WTC11 (cell line): ENCODE measurements at regions of chr2 and their contacts with region 1.

Region 1: GRCh38 chr2:16525265-16525887 is 140.3 kb downstream of the CYRIA start:
- DNase-seq: peak; percentile 81
- ATAC-seq: peak; percentile 82
- H3K4me3 Mint-ChIP-seq: no peak overlapping the region
- H3K27ac Mint-ChIP-seq: no peak overlapping the region
- H3K4me1 Mint-ChIP-seq: peaks cover 15% of the 10 kb centered on the region
- H3K27me3 Mint-ChIP-seq: peaks cover 3% of the 10 kb centered on the region; the same call in 1 of the 2 replicates
- CTCF ChIP-seq: peak; percentile 78

Region 2: DNA sequence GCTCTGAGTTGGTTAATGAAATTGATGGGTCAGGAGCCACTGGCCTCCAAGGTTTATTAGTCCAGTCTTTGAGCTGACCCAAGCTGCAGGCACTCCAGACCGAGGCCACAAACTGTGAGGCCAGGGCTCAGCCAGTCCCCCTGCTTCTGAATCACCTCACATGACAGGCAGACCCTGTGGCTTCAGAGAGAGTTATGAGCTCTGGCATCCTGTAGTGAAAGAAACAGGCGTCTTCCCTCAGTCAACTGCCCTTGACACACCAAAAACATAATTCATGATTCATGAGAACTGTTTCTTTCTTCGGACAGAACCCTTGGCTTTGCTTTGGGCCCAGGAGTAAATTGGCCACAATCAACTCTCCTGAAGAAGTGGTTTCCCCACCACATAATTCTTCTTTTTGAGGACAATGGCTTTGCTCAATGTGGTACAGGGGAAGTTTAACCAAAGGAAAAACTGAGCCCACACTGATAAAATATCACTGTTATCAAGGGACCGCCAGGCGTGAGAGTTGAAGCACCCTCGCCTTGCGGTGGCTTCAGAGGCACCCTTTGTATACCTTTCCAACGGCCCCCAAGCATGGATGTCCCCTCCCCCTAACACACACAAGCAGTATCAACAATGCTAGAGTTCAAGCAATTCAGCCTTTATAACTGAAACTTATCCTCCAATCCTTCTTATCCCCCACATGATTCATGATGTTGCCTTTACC is 86.6 kb before region 1 on chr2:
- CTCF ChIA-PET with region 1: no interaction called
- POLR2A ChIA-PET with region 1: no interaction called
- DNase-seq: no peak
- ATAC-seq: no peak
- H3K4me3 Mint-ChIP-seq: no peak overlapping the region
- H3K27ac Mint-ChIP-seq: no peak overlapping the region
- H3K4me1 Mint-ChIP-seq: no peaks in the 10 kb centered on the region
- H3K27me3 Mint-ChIP-seq: no peaks in the 10 kb centered on the region
- CTCF ChIP-seq: no peak

Region 3: DNA sequence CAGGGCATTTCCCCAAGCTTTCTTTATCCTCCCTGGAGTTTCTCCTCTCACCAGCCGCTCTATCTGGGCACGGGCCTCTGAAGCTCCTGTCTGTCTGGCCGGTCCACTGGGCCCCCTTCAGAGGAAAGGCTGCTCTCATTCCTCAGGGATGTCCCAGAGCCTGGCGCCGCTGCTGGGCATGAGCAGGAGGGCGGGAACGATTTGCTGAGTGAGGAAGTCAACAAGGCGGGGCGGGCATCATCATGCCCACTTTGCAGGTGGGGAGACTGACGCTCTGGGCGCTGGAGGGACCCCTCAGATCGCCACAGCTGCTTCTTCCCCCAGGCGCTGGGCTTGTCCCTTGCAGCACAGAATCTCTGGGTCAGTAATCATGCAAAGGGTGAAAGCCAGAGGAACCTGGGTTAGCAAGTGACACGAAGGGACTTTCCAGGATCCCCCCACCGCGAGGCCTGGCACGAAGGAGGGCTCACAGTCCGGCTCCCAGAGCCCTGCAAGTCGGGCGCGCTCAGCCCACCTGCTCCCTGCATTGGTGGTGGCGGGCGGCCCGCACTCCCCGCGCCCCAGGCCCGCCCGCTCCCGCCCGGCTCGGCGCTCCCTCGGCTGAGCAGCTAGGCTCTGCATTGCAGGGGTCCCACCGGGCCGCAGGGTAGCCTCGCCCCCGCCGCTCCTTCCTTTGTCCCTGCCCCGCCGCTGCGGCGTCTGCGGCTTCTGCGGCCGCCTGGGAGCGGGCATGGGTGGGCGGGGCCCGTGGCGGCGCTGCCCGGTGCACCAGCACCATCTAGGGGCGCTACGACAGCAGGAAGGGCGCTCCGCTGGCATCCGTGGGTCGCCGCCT is 17.5 kb before region 1 on chr2:
- CTCF ChIA-PET with region 1: interaction called, 19 read pairs
- POLR2A ChIA-PET with region 1: no interaction called
- DNase-seq: peak; percentile 73
- ATAC-seq: peak; percentile 85
- H3K4me3 Mint-ChIP-seq: peak overlapping the region; percentile 73
- H3K27ac Mint-ChIP-seq: no peak overlapping the region
- H3K4me1 Mint-ChIP-seq: peaks cover 10% of the 10 kb centered on the region
- H3K27me3 Mint-ChIP-seq: peaks cover 19% of the 10 kb centered on the region
- CTCF ChIP-seq: peak; percentile 48; the same call in 1 of the 2 replicates

Region 4: DNA sequence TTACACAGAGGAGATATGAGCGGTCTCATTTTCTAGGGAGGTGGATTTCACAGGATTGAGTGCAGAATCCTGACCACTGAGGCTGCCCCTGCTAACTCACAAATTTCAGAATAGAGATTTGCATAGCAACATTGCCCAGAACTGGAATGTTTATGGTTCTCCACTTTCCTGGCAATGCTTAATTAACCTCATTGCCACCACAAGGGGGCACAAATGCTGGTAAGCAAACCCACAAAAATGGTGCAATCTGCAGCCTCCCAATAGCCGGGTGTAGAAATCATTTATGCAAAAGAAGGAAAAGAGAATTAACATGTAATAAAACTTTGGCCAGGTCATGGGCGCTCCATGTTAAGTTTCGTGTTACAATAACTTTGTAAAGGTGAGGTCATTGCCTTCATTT is 27.9 kb after region 1 on chr2:
- CTCF ChIA-PET with region 1: interaction called, 14 read pairs
- POLR2A ChIA-PET with region 1: no interaction called
- DNase-seq: peak; percentile 30
- ATAC-seq: peak; percentile 76; the same call in 1 of the 2 replicates
- H3K4me3 Mint-ChIP-seq: no peak overlapping the region
- H3K27ac Mint-ChIP-seq: no peak overlapping the region
- H3K4me1 Mint-ChIP-seq: 0 out of 2 replicates have a peak, but pooled peaks cover 2% of the 10 kb centered on the region
- H3K27me3 Mint-ChIP-seq: no peaks in the 10 kb centered on the region
- CTCF ChIP-seq: peak; percentile 67

Region 5: GRCh38 chr2:16658076-16658743 is 132.8 kb after region 1 on chr2:
- CTCF ChIA-PET with region 1: no interaction called
- POLR2A ChIA-PET with region 1: no interaction called
- DNase-seq: no peak
- ATAC-seq: no peak
- H3K4me3 Mint-ChIP-seq: no peak overlapping the region
- H3K27ac Mint-ChIP-seq: 0 out of 2 replicates have a peak overlapping the region, but pooled peaks have one; percentile 26
- H3K4me1 Mint-ChIP-seq: peaks cover 39% of the 10 kb centered on the region
- H3K27me3 Mint-ChIP-seq: no peaks in the 10 kb centered on the region
- CTCF ChIP-seq: no peak

Region 6: DNA sequence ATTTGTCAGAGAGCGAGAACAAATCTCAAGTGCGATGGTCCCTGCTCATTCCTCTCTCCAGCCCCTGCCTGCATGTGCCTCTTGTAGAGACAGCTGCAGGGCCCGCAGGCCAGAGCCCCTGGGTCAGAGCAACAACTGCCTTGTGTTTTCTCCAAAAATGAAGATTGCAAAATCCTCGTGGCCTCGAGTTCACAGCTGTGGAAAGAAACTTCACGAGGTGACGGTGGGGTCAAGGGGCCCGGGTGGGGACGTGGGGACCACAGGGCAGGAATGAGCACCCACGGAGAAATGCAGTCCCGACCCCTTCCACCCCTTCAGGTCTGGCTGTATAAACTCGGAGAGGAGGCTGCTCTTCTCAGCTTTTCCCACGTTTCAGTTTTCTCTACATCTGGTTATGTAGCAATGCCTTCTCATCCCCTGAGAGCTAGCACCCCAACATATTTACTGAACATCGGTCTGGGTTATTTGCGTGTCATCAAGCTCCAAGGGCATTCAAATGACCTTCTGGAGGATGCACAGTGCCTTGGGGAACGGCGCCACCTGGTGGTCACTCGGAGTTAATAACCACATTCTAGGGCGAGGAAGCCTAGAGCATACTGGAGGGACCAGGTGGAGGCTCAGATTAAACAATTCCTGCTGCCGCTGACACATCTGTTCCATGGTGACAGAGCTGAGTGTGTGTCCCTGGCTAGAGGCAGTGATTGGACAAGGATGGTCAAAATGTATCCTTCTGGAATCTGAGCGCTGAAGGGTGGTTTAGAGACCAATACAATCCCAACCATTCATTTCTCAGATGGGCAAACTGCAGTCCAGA is 231.7 kb after region 1 on chr2:
- CTCF ChIA-PET with region 1: interaction called, 14 read pairs
- POLR2A ChIA-PET with region 1: no interaction called
- DNase-seq: peak; percentile 81
- ATAC-seq: peak; percentile 96
- H3K4me3 Mint-ChIP-seq: no peak overlapping the region
- H3K27ac Mint-ChIP-seq: peak overlapping the region; percentile 85; the same call in 1 of the 2 replicates
- H3K4me1 Mint-ChIP-seq: peaks cover 2% of the 10 kb centered on the region
- H3K27me3 Mint-ChIP-seq: no peaks in the 10 kb centered on the region; the same call in 1 of the 2 replicates
- CTCF ChIP-seq: peak; percentile 95